ENCODE measurements at regions of chr16 and their contacts with region 1.

Region 1: DNA sequence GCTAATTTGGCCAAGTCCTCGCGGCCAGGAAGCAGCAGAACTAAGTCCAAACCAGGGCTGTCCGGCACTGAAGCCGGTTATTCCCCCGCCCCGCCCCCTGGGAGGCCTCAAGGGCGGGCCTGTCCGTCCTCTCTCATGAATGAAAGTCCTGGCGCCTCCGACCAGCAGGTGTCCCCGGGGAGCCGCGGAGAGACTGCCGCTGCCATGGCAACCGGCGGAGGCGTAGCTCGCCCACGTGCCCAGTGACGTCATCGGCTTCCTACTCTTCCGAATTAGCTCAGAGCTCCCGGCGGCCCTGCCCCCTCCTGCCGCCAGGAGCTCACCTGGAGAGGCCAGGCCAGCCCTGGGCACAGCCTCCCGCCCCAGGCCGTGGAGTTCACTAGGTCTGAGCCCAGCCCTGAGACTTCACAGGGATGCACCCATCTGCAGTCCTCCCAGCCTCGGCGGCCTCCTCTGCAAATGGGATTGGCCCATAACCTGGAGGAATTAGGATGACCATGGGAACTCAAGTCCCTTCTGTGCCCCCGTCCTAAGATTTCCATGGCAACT is 1.3 kb downstream of the SPATA2L start:
- DNase-seq: peak; percentile 98
- ATAC-seq: peak; percentile 38
- H3K4me3 Mint-ChIP-seq: peak overlapping the region; percentile 66
- H3K27ac Mint-ChIP-seq: peak overlapping the region; percentile 24
- H3K4me1 Mint-ChIP-seq: peaks cover 33% of the 10 kb centered on the region
- H3K27me3 Mint-ChIP-seq: no peaks in the 10 kb centered on the region

Region 2: DNA sequence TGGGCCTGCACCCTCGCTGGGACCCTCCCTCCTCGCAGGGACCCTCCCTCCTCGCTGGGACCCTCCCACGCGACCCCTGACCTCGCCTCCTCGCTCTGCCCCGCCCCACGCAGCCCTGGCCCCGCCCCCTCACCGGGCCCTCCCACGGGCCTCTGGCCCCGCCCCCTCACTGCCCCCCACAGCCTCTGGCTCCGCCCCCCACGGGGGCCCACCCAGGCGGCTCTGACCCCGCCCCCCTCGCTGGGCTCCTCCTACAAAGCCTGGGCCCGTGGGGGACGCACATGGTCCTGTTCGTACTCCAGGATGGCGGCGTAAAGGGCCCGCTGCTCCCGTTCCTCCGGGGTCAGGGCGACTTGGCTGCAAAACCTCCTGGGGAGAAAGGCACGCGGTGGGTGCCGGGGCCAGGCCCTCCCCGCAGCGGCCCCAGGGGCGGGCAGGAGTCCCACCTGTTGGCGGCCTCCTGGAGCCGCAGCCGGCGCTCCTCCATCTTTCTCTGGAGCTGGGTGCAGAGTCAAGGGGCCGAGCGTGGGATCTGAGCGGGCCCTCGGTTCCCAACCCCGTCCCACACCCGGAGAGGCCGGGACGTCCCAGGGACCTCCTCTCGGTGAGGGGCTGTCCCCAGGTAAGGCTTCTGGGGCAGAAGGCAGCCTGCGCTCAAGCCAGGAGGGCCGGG is 11.6 kb after region 1 on chr16:
- CTCF ChIA-PET with region 1: interaction called, 24 read pairs
- DNase-seq: peak; percentile 87
- ATAC-seq: peak; percentile 92
- H3K4me3 Mint-ChIP-seq: peak overlapping the region; percentile 68
- H3K27ac Mint-ChIP-seq: no peak overlapping the region
- H3K4me1 Mint-ChIP-seq: peaks cover 13% of the 10 kb centered on the region
- H3K27me3 Mint-ChIP-seq: no peaks in the 10 kb centered on the region

Region 3: GRCh38 chr16:89737341-89738071 is 37.3 kb after region 1 on chr16:
- CTCF ChIA-PET with region 1: interaction called, 15 read pairs
- DNase-seq: peak; percentile 77
- ATAC-seq: peak; percentile 70
- H3K4me3 Mint-ChIP-seq: no peak overlapping the region
- H3K27ac Mint-ChIP-seq: peak overlapping the region; percentile 79
- H3K4me1 Mint-ChIP-seq: peaks cover 24% of the 10 kb centered on the region
- H3K27me3 Mint-ChIP-seq: no peaks in the 10 kb centered on the region

Region 4: DNA sequence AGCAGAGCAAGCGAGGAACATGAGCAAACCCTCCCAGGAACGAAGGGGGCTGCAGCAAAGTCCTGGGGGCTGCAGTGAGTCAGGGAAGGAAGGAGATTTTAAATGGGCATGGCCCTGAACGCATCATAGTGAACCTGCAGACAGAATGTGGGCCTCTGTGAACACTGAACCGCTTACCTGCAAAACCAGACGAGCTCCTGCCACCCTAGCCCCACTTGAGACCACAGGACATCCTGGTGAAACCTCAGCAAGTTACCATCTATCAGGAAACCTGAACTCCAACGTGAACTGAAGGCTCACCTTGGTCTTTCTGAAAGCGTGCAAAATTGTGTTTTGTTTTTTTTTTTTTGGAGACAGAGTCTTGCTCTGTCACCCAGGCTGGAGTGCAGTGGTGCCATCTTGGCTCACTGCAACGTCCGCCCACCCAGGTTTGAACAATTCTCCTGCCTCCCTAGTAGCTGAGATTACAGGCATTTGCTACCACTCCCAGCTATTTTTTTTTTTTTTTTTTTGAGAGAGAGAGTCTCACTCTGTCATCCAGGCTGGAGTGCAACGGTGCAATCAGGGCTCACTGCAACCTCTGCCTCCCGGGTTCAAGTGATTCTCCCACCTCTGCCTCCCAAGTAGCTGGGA is 85.5 kb after region 1 on chr16:
- CTCF ChIA-PET with region 1: interaction called, 100 read pairs
- DNase-seq: peak; percentile 73
- ATAC-seq: peak; percentile 71
- H3K4me3 Mint-ChIP-seq: no peak overlapping the region
- H3K27ac Mint-ChIP-seq: peak overlapping the region; percentile 73
- H3K4me1 Mint-ChIP-seq: peaks cover 34% of the 10 kb centered on the region
- H3K27me3 Mint-ChIP-seq: no peaks in the 10 kb centered on the region

Region 5: GRCh38 chr16:89873972-89874689 is 174.0 kb after region 1 on chr16:
- CTCF ChIA-PET with region 1: interaction called, 20 read pairs
- DNase-seq: peak; percentile 96
- ATAC-seq: peak; percentile 74
- H3K4me3 Mint-ChIP-seq: peak overlapping the region; percentile 83
- H3K27ac Mint-ChIP-seq: peak overlapping the region; percentile 98
- H3K4me1 Mint-ChIP-seq: peaks cover 21% of the 10 kb centered on the region
- H3K27me3 Mint-ChIP-seq: no peaks in the 10 kb centered on the region

Region 6: DNA sequence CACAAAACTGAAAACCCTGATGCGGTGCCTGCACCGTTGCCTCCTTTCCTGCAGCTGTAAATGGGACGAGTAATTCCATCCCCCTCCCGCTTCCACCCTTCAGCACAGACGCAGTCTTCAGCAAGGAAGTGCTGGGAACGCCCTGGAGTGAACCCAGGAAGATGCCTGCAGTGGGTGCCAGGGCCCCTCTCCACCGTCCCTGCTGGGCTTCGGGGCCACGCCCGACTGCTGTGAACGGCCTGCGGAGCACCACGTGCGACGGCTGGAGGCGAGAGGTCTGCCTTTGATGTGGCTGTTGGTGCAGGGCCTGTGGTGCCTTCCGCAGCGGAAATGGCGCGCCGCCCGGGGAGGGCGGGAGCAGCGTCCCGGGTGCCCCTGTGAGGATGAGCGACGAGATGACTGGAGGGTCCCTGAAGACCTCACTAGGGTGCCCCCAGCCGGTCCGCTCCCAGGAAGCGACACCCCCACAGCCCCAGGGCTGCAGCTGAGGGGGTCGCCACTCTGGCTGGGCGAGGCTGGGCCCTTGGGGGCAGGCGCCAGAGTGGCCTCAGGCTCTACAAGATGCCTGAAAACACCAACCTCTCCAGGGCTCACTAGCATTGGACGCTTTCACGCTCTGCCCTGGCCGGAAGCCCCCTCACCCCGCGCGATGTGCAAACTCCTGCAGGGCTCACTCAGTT is 217.7 kb after region 1 on chr16:
- CTCF ChIA-PET with region 1: interaction called, 10 read pairs
- DNase-seq: peak; percentile 92
- ATAC-seq: peak; percentile 74
- H3K4me3 Mint-ChIP-seq: peak overlapping the region; percentile 58
- H3K27ac Mint-ChIP-seq: peak overlapping the region; percentile 75
- H3K4me1 Mint-ChIP-seq: peaks cover 52% of the 10 kb centered on the region
- H3K27me3 Mint-ChIP-seq: peaks cover 26% of the 10 kb centered on the region

Measured in activated CD8-positive, alpha-beta memory T cell treated with anti-CD3 and anti-CD28 coated beads, Interleukin-2, amount 10 ng/mL, durations not matched to agents 7 days and 5 days (primary cell).